Activated T-helper 1 cell treated with anti-CD3 and anti-CD28 coated beads, Interleukin-12 subunit alpha, Interleukin-12 subunit beta, Interleukin-2, Interleukin-4 antibody, amounts not matched to agents 30 ng/mL and 10 ng/mL and 1 ng/mL, durations not matched to agents 14 hours and 24 hours and 36 hours (primary cell): ENCODE measurements at regions of chr16 and their contacts with region 1.

Region 1: GRCh38 chr16:25279491-25279890 is 21.8 kb upstream of the ZKSCAN2 start:
- DNase-seq: no peak
- H3K4me3 Mint-ChIP-seq: no peak overlapping the region
- H3K27ac Mint-ChIP-seq: no peak overlapping the region
- H3K4me1 Mint-ChIP-seq: peaks cover 5% of the 10 kb centered on the region
- H3K27me3 Mint-ChIP-seq: peaks cover 12% of the 10 kb centered on the region

Region 2: GRCh38 chr16:27109666-27110523 is 1830.4 kb after region 1 on chr16:
- intact Hi-C with region 1: loop called (anchors 5 kb)
- DNase-seq: peak; percentile 62
- H3K4me3 Mint-ChIP-seq: peak overlapping the region; percentile 64
- H3K27ac Mint-ChIP-seq: no peak overlapping the region
- H3K4me1 Mint-ChIP-seq: no peaks in the 10 kb centered on the region
- H3K27me3 Mint-ChIP-seq: peaks cover 6% of the 10 kb centered on the region